Astrocyte of the cerebellum (primary cell): ENCODE measurements at regions of chr16 and their contacts with region 1.

Region 1: GRCh38 chr16:48444574-48444973 is 59.4 kb upstream of the SIAH1 start:
- DNase-seq: peak; percentile 70
- H3K4me3 ChIP-seq: no peak overlapping the region
- CTCF ChIP-seq: no peak

Region 2: DNA sequence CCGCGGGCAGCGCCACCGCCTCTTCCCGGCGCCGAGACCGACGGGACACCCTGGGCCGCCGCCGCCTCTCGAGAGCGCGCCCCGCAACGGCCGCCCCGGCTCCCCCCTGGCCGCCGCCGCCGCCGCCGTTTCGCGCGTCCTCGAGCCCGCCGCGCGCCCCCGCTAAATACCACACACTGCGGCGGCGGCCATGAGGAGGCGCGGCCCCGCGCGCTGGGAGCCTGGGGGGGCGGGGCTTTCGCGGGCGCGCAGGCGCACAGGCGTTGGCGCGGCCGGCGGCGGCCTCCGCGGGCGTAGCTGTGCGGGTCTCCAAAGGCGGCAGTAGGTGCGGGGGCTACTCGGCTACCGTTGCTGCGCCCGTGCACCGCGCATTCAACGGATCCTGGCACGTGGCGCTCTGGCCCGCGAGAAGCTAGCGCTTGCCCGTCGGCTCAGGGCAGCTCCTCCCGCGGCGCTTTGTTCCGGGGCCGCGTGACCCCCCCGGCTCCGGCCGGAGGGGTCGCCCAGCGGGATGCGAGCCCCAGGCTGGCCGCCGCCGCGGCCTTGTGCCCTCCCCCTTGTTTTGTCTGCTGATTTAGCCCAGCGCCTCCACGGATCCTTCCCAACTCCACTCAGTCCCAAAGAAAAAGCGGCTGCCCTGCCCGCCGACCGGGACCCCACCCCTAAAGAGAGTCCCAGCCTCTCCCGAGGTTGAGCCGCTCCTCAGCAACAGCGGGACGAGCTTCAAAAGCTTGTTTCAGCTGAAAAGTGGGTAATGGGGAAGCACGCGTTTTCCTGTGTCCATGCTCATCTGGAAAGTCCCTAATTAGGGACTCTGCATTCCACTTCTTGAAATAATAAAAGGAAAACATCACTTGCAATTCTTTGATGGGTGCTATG is 59.1 kb before region 1 on chr16 and contains the start of gene SIAH1:
- in situ Hi-C with region 1: loop called (anchors 10 kb)
- DNase-seq: no peak
- H3K4me3 ChIP-seq: peak within 1 kb of the TSS; percentile 66
- CTCF ChIP-seq: no peak

Region 3: GRCh38 chr16:48499923-48500381 is 55.4 kb after region 1 on chr16:
- in situ Hi-C with region 1: loop called (anchors 5 kb)
- DNase-seq: peak; percentile 91
- H3K4me3 ChIP-seq: no peak overlapping the region
- CTCF ChIP-seq: no peak